MCF 10A (cell line): ENCODE measurements at regions of chr3 and their contacts with region 1.

Region 1: DNA sequence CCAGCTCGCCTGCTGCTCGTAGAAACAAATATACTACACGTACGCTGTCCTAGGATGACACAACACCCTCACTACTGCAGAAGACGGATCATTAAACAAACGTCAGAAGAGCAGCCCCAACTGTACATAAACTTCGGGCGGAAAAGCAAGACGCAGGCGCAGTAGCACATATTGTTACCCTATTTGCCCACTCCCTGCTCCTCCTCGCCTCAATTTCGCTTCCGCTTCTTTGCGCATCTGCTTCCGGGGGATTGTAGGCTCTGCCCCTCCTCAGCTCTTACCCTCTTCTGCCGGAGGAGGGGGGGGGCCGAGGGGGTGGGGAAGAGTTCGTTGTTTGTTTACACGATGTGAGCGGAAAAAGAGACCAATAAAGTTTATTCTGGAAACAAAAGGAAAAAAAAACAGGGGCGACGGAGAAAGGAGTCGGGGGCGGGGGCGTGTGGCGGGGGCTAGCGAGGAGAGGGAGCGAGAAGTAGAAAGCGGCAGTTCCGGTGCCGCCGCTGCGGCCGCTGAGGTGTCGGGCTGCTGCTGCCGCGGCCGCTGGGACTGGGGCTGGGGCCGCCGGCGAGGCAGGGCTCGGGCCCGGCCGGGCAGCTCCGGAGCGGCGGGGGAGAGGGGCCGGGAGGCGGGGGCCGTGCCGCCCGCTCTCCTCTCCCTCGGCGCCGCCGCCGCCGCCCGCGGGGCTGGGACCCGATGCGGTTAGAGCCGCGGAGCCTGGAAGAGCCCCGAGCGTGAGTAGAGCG is at the start of gene PIK3CA:
- DNase-seq: peak; percentile 99
- H3K4me3 Mint-ChIP-seq: no peak within 1 kb of the TSS
- H3K27ac Mint-ChIP-seq: no peak within 1 kb of the TSS
- H3K4me1 Mint-ChIP-seq: peaks cover 23% of the 10 kb centered on the region
- H3K27me3 Mint-ChIP-seq: no peaks in the 10 kb centered on the region
- CTCF ChIP-seq: no peak
- total RNA-seq, gene PIK3CA: 18.1 and 20.7 TPM in 2 replicates

Region 2: GRCh38 chr3:179015551-179016020 is 132.5 kb before region 1 on chr3:
- CTCF ChIA-PET with region 1: no interaction called
- POLR2A ChIA-PET with region 1: no interaction called
- intact Hi-C with region 1: loop called (anchors 1 kb)
- DNase-seq: peak; percentile 82
- H3K4me3 Mint-ChIP-seq: no peak overlapping the region
- H3K27ac Mint-ChIP-seq: peak overlapping the region; percentile 54
- H3K4me1 Mint-ChIP-seq: no peaks in the 10 kb centered on the region
- H3K27me3 Mint-ChIP-seq: no peaks in the 10 kb centered on the region
- CTCF ChIP-seq: peak; percentile 81

Region 3: DNA sequence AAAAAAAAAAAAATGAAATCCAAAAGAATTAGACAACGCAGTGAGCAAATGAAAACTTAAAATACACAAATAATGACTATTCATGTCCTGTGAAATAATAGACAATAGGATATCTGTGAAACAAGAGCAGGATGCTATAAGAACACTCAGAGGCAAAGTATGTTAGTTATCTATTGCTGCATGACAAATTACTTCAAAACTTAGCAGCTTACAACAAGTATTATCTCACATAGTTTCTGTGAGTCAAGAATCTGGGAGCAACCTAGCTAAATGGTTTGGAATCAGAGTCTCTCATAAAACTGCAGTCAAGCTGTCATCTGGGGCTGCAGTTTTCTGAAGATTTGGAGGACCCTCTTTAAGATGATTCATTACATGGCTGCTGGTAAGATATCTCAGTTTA is 40.0 kb before region 1 on chr3:
- CTCF ChIA-PET with region 1: interaction called, 24 read pairs
- POLR2A ChIA-PET with region 1: interaction called, 13 read pairs
- intact Hi-C with region 1: loop called (anchors 1 kb)
- DNase-seq: no peak
- H3K4me3 Mint-ChIP-seq: no peak overlapping the region
- H3K27ac Mint-ChIP-seq: no peak overlapping the region
- H3K4me1 Mint-ChIP-seq: no peaks in the 10 kb centered on the region
- H3K27me3 Mint-ChIP-seq: no peaks in the 10 kb centered on the region
- CTCF ChIP-seq: no peak

Region 4: DNA sequence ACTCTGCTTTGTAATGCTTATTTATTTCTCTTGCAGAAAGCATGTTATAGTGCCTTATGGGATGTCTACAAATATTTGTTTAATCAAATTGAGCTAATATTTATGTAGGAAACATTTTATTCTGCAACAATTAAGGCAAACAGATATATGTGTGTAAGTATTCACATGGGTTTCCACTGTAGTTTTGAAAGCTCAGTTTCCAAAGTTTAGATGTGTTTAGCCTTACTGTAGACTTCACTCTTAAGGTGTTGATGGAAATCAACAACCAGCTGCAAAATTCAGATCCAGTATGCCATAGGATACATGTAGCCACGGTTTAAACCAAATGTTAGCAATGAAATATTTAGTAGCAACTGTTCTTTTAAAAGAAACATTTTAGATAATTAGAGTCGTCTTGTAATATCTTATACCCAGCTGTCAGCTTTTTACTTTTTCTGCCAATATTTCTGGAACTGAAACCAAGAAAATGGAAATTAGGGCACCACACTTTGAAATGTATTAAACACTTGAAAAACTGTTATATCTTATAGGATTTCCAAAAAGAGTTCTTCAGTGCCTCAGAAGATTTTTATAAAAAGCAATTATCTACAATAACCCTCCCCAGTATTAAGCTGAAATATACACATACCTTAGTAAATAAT is 18.6 kb after region 1 on chr3:
- CTCF ChIA-PET with region 1: interaction called, 3 read pairs
- POLR2A ChIA-PET with region 1: interaction called, 11 read pairs
- intact Hi-C with region 1: no loop called
- DNase-seq: no peak
- H3K4me3 Mint-ChIP-seq: no peak overlapping the region
- H3K27ac Mint-ChIP-seq: no peak overlapping the region
- H3K4me1 Mint-ChIP-seq: peaks cover 6% of the 10 kb centered on the region
- H3K27me3 Mint-ChIP-seq: no peaks in the 10 kb centered on the region
- CTCF ChIP-seq: no peak

Region 5: DNA sequence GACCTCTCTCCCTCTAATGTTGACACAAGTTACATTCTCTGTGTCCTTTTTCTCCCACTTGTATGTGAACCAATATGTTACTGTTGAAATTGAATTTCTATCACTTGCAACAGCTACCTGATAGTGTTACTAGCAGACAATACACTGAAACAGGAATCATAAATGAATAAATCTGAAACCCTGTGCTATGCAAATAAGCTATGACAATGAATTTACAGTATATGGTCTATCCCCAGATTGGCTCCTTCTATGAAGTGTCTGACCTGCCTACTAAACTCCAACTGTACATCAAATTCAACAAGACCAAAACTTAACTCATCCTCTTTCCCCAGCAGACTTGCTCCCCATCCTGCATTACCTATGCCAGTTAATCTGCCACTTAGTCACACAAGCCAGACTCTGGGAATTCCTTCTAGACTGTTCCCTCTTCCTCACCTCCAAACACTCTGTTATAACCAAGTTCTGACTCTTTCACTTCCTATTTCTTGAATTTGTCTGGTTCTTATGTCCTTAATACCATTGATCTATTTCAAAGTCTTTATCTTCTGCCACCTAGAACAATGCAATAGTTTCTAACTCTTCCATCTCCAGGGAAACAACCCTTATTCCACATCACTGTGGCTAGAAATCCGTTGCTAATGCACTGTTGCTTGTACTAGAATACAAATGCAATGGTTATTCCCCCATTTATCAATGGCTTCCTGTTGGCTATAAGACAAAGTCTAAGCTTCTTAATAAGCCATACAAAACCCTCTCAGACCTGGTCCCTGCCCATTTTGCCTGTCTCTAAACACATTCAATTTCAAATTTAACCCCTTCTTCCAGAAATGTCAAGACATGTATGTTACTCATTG is 161.4 kb after region 1 on chr3:
- CTCF ChIA-PET with region 1: interaction called, 11 read pairs
- POLR2A ChIA-PET with region 1: interaction called, 17 read pairs
- intact Hi-C with region 1: no loop called
- DNase-seq: no peak
- H3K4me3 Mint-ChIP-seq: no peak overlapping the region
- H3K27ac Mint-ChIP-seq: no peak overlapping the region
- H3K4me1 Mint-ChIP-seq: no peaks in the 10 kb centered on the region
- H3K27me3 Mint-ChIP-seq: no peaks in the 10 kb centered on the region
- CTCF ChIP-seq: no peak